ENCODE measurements at regions of chr9 and their contacts with region 1.

Region 1: GRCh38 chr9:122931226-122932121 is at the start of gene ZBTB26:
- DNase-seq: peak; percentile 86 to 94
- ATAC-seq: peak; percentile 96 to 99 (median 98)
- H3K4me3 ChIP-seq: peak within 1 kb of the TSS; percentile 86
- H3K4me3 Mint-ChIP-seq: no peak within 1 kb of the TSS
- H3K27ac ChIP-seq: peak within 1 kb of the TSS; percentile 95
- H3K27ac Mint-ChIP-seq: no peak within 1 kb of the TSS
- H3K4me1 ChIP-seq: peaks cover 15% of the 10 kb centered on the region
- H3K4me1 Mint-ChIP-seq: peaks cover 14 to 16% of the 10 kb centered on the region in 2 donors
- H3K27me3 ChIP-seq: no peaks in the 10 kb centered on the region
- H3K27me3 Mint-ChIP-seq: no peaks in the 10 kb centered on the region
- CTCF ChIP-seq: no peak
- total RNA-seq, gene ZBTB26: 7.8 to 12.2 (median 9.2) TPM

Region 2: GRCh38 chr9:122912964-122913673 is 18.4 kb before region 1 on chr9 and contains the start of gene ZBTB6:
- intact Hi-C with region 1: loop called (anchors 2 kb)
- DNase-seq: peak; percentile 42 to 88
- ATAC-seq: peak; percentile 87 to 93 (median 87)
- H3K4me3 ChIP-seq: peak within 1 kb of the TSS; percentile 88
- H3K4me3 Mint-ChIP-seq: peak within 1 kb of the TSS; percentile 95
- H3K27ac ChIP-seq: peak within 1 kb of the TSS; percentile 83
- H3K27ac Mint-ChIP-seq: peak within 1 kb of the TSS; percentile 91 to 92
- H3K4me1 ChIP-seq: peaks cover 9% of the 10 kb centered on the region
- H3K4me1 Mint-ChIP-seq: peaks cover 28 to 31% of the 10 kb centered on the region in 2 donors
- H3K27me3 ChIP-seq: no peaks in the 10 kb centered on the region
- H3K27me3 Mint-ChIP-seq: no peaks in the 10 kb centered on the region
- CTCF ChIP-seq: no peak
- total RNA-seq, gene ZBTB6: 4.7 to 6.6 (median 5.8) TPM

Measured in natural killer cell (primary cell).